ENCODE measurements at regions of chr12 and their contacts with region 1.

Region 1: DNA sequence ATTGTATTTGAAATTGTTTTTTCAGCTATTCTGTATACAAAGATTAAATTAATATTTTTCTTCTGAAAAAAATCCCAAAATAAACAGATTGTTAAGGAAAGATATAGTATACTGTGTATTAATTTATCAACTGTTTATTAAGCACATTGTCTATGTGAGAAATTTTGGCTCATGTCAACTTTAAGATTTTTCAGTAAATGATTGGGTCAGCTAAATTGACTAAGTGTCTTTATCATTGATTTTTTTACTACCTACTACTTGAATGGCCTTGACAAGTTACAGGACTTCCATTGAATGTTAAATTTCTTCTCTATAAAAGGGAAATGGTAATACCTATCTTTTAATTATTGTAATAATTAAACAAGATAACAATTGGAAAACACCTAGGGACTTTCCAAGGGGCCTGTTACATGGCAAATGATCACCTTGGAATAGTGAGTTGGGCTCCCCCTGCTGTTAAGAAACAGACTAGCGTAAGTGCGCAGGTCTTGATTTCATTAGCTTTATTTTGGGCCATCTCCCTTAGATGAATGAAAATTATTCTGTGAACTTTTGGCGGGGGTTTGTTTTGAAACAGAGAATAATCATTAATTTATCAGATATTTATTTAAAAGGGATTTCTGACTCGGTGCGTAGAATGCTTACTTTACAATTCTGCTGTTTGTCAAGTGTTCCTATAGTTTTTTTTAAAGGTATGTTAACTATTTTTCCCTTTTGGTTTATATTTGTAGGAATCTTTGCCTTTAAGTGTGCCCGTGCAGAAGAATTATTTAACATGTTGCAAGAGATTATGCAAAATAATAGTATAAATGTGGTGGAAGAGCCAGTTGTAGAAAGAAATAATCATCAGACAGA is 14.5 kb upstream of the CCT2 start:
- DNase-seq: peak; percentile 15
- ATAC-seq: peak; percentile 97
- H3K4me3 ChIP-seq: no peak overlapping the region
- H3K27ac ChIP-seq: no peak overlapping the region; the same call in 1 of the 2 replicates
- H3K4me1 ChIP-seq: no peaks in the 10 kb centered on the region
- H3K27me3 ChIP-seq: no peaks in the 10 kb centered on the region
- CTCF ChIP-seq: peak; percentile 66 to 77 (median 72)
- EP300 ChIP-seq: no peak
- POLR2A ChIP-seq: no peak
- RAD21 ChIP-seq: peak; percentile 88

Region 2: GRCh38 chr12:69290545-69291277 is 280.1 kb before region 1 on chr12:
- CTCF ChIA-PET with region 1: interaction called, 16 read pairs
- POLR2A ChIA-PET with region 1: no interaction called
- RAD21 ChIA-PET with region 1: interaction called, 10 read pairs
- SMC1A ChIA-PET with region 1: interaction called, 7 read pairs
- in situ Hi-C with region 1: no loop called
- intact Hi-C with region 1: loop called (anchors 5 kb)
- DNase-seq: peak; percentile 32
- ATAC-seq: peak; percentile 100
- H3K4me3 ChIP-seq: no peak overlapping the region
- H3K27ac ChIP-seq: no peak overlapping the region
- H3K4me1 ChIP-seq: no peaks in the 10 kb centered on the region
- H3K27me3 ChIP-seq: no peaks in the 10 kb centered on the region
- CTCF ChIP-seq: peak; percentile 97 to 99 (median 99); a peak in 5 of 6 replicates
- EP300 ChIP-seq: no peak
- POLR2A ChIP-seq: no peak
- RAD21 ChIP-seq: peak; percentile 96

Region 3: GRCh38 chr12:69388371-69388770 is 182.4 kb before region 1 on chr12:
- CTCF ChIA-PET with region 1: interaction called, 129 read pairs
- POLR2A ChIA-PET with region 1: no interaction called
- RAD21 ChIA-PET with region 1: interaction called, 61 read pairs
- SMC1A ChIA-PET with region 1: interaction called, 32 read pairs
- in situ Hi-C with region 1: loop called (anchors 10 kb)
- intact Hi-C with region 1: loop called (anchors 1 kb)
- DNase-seq: no peak
- ATAC-seq: peak; percentile 60
- H3K4me3 ChIP-seq: no peak overlapping the region
- H3K27ac ChIP-seq: no peak overlapping the region
- H3K4me1 ChIP-seq: no peaks in the 10 kb centered on the region
- H3K27me3 ChIP-seq: no peaks in the 10 kb centered on the region
- CTCF ChIP-seq: peak; percentile 18 to 55 (median 54); a peak in 3 of 6 replicates
- EP300 ChIP-seq: no peak
- POLR2A ChIP-seq: no peak
- RAD21 ChIP-seq: peak; percentile 61

Region 4: GRCh38 chr12:69470189-69471075 is 100.3 kb before region 1 on chr12 and contains the start of gene FRS2:
- CTCF ChIA-PET with region 1: interaction called, 38 read pairs
- POLR2A ChIA-PET with region 1: interaction called, 4 read pairs
- RAD21 ChIA-PET with region 1: interaction called, 20 read pairs
- SMC1A ChIA-PET with region 1: interaction called, 11 read pairs
- in situ Hi-C with region 1: no loop called
- intact Hi-C with region 1: loop called (anchors 1 kb)
- DNase-seq: peak; percentile 19
- ATAC-seq: peak; percentile 98
- H3K4me3 ChIP-seq: peak within 1 kb of the TSS; percentile 86
- H3K27ac ChIP-seq: peak within 1 kb of the TSS; percentile 91
- H3K4me1 ChIP-seq: peaks cover 8% of the 10 kb centered on the region; the same call in 1 of the 2 replicates
- H3K27me3 ChIP-seq: no peaks in the 10 kb centered on the region
- CTCF ChIP-seq: peak; percentile 16 to 44 (median 38); a peak in 3 of 6 replicates
- EP300 ChIP-seq: no peak
- POLR2A ChIP-seq: peak; percentile 80
- RAD21 ChIP-seq: peak; percentile 71
- polyA plus RNA-seq, gene FRS2: 1.1 TPM

Region 5: GRCh38 chr12:69553627-69554248 is 17.0 kb before region 1 on chr12:
- CTCF ChIA-PET with region 1: interaction called, 20 read pairs
- POLR2A ChIA-PET with region 1: no interaction called
- RAD21 ChIA-PET with region 1: no interaction called
- SMC1A ChIA-PET with region 1: interaction called, 24 read pairs
- in situ Hi-C with region 1: no loop called
- intact Hi-C with region 1: no loop called
- DNase-seq: no peak
- ATAC-seq: no peak
- H3K4me3 ChIP-seq: no peak overlapping the region
- H3K27ac ChIP-seq: no peak overlapping the region
- H3K4me1 ChIP-seq: no peaks in the 10 kb centered on the region
- H3K27me3 ChIP-seq: no peaks in the 10 kb centered on the region
- CTCF ChIP-seq: no peak
- EP300 ChIP-seq: no peak
- POLR2A ChIP-seq: no peak
- RAD21 ChIP-seq: no peak